G401 (cell line): ENCODE measurements at regions of chr20 and their contacts with region 1.

Region 1: DNA sequence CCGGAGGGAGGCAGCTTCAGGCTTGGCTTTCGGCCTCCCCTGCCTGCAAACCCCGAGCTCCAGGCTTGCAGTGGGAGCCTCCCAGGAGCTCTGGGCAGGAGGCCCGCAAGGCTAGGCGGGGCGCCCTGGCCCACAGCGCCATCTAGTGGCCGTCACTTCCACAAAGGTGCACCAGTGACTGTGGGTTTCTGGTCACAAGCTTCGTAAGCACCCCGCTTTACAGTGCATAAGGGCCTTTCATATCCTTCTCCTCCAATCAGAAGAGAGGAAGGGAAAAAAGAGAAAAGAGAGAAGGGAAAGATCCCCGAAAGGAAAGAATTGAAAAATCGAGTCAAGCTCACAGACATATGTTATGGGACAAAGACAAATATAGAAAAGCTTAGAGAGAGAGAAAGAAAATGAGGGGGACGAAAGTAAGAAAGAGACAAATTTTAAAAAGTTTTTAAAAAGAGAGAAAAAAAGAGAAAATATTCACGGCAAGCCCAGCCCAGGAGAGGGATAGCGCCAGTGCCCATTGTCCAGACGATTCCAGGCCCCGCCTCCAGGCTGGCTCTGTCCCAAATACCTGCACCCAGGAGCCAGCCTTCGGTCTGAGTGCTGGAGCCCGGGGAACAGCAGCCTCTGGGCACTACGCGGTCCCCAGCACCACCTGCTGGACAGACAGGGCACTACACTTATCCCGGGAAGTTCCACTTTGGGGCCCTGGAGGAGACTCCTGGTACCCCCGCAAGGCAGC is 207.1 kb downstream of the PREX1 start:
- DNase-seq: peak; percentile 81

Region 2: DNA sequence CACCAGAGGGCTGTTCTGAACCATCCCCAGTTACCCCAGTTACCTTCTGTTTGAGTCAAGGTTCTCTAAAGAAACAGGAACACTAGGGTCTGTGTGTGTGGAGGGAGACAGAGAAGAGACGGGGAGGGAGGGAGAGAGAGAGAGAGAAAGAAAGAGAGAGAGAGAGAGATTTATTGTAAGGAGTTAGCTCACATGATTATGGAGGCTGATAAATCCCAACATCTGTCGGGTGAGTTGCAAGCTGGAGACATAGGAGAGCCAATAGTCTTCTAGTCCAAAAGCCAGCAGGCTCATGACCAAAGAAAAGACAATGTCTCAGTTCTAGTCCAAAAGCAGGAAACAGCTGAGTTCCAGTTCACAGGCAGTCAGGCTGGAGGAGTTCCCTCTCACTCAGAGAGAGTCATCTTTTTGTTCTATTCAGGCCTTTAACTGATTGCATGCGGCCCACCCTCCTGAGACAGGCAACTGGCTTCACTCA is 209.5 kb before region 1 on chr20:
- in situ Hi-C with region 1: loop called (anchors 10 kb)
- DNase-seq: no peak